ENCODE measurements at regions of chr3 and their contacts with region 1.

Region 1: DNA sequence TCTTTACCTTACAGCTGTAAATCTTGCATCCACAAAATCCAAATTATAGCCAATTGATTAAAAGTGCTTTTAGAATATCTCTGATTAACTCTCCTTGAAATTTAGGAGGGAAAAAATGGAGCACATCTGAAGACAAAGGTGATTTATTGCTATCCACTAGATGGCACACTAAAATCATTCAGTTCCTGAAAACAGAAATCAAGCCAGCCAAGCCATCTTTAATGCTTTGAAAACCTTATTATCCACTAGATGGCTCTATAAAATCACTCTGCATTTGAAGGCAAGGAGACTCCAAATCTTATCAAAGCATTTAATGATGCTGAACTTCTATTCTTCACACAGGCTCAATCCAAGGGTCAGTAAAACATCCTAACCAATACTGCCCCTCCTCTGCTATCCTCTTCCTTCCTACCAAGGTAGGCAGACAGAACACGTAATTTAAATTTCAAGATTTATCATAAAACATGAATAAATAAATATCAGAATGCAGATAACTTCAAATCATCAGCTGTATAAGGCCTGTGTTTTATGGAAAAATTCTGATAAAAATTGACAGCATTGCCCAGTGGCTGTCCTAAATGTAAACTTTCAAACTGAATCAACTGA is 48.4 kb downstream of the GOLIM4 start:
- DNase-seq: peak in 2 of 4 donors; percentile 73 to 81
- ATAC-seq: peak; percentile 94
- H3K4me3 ChIP-seq: no peak overlapping the region
- H3K27ac ChIP-seq: no peak overlapping the region
- H3K4me1 ChIP-seq: peaks cover 7% of the 10 kb centered on the region in 2 donors
- H3K27me3 ChIP-seq: no peaks in the 10 kb centered on the region
- CTCF ChIP-seq: peak; percentile 57 to 81

Region 2: GRCh38 chr3:168134931-168135330 is 87.6 kb after region 1 on chr3:
- intact Hi-C with region 1: no loop called
- DNase-seq: no peak
- ATAC-seq: no peak
- H3K4me3 ChIP-seq: no peak overlapping the region
- H3K27ac ChIP-seq: no peak overlapping the region
- H3K4me1 ChIP-seq: no peaks in the 10 kb centered on the region
- H3K27me3 ChIP-seq: no peaks in the 10 kb centered on the region
- CTCF ChIP-seq: no peak

Region 3: DNA sequence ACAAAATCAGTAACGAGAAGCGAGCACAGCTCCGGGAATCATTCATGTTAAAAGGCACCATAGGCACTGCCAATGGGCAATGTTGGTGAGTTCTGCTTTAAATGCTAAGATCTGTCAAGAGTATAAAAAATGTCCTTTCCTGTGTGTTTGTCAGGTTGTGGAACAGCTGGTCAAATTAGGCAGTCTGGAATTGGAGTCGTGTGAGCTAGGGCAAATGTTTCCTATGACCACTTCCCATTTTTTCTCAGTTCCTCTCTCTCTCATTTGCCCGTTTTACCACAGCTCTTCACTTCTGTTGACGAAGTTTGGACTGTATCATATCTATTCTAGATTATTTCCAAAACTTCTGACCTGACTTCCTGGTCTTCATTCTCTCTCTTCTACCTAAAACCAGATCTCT is 109.2 kb after region 1 on chr3:
- intact Hi-C with region 1: loop called in 1 of 2 experiments (anchors 10 kb)
- DNase-seq: no peak
- ATAC-seq: peak; percentile 42
- H3K4me3 ChIP-seq: no peak overlapping the region
- H3K27ac ChIP-seq: no peak overlapping the region
- H3K4me1 ChIP-seq: no peaks in the 10 kb centered on the region
- H3K27me3 ChIP-seq: no peaks in the 10 kb centered on the region
- CTCF ChIP-seq: no peak

Region 4: GRCh38 chr3:168165390-168166269 is 118.3 kb after region 1 on chr3:
- intact Hi-C with region 1: loop called in 1 of 2 experiments (anchors 5 kb)
- DNase-seq: peak in 3 of 4 donors; percentile 39 to 86 (median 72)
- ATAC-seq: peak; percentile 94
- H3K4me3 ChIP-seq: no peak overlapping the region
- H3K27ac ChIP-seq: no peak overlapping the region
- H3K4me1 ChIP-seq: no peaks in the 10 kb centered on the region
- H3K27me3 ChIP-seq: no peaks in the 10 kb centered on the region
- CTCF ChIP-seq: peak; percentile 58 to 80